Activated T-helper 1 cell treated with anti-CD3 and anti-CD28 coated beads, Interleukin-12 subunit alpha, Interleukin-12 subunit beta, Interleukin-2, Interleukin-4 antibody, amounts not matched to agents 30 ng/mL and 10 ng/mL and 1 ng/mL, durations not matched to agents 14 hours and 24 hours and 36 hours (primary cell): ENCODE measurements at regions of chr19 and their contacts with region 1.

Region 1: DNA sequence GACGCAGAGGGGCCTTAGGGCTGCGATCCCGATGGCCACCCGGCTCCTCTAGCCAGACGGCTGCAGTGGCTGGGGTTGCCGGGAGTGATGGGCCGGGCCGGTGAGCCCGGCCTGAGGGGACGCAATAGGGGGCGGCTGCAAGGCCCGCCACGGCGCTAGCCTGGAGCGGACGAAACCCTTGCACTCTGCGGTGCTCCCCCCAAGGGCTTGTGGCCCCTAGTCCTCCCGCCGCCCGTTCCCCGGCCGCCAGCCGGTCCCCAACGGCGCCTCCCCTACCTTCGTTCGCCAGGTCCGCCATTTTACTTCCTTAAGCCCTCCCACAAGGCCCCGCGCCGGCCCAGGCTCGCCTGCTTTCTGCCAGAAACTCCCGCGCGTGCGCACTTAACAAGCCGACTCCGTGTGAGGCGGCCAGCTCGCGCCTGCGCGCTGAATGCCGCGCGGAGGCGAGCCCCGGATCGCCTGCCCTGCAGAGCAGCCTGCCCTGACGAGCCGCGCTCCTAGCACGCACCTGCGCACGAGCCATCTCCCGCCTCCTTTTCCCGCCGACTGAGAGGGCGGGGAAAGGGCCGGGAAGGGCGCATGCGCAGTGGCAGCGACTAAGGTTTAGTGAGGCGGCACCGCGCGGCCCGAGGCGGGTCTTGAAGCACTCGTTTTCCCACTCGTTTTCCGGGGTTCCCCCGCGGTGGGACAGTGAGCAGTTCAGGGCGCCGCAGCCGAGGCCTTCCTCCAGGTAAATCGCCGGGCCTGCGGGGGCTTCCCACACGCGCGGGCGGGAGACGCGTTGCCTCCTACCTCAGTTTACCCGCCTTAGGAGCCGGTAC is at the start of gene RANBP3:
- DNase-seq: peak; percentile 100
- H3K4me3 Mint-ChIP-seq: peak within 1 kb of the TSS; percentile 98
- H3K27ac Mint-ChIP-seq: peak within 1 kb of the TSS; percentile 92
- H3K4me1 Mint-ChIP-seq: peaks cover 54% of the 10 kb centered on the region
- H3K27me3 Mint-ChIP-seq: no peaks in the 10 kb centered on the region
- total RNA-seq, gene RANBP3: 122 and 126 TPM in 2 replicates

Region 2: DNA sequence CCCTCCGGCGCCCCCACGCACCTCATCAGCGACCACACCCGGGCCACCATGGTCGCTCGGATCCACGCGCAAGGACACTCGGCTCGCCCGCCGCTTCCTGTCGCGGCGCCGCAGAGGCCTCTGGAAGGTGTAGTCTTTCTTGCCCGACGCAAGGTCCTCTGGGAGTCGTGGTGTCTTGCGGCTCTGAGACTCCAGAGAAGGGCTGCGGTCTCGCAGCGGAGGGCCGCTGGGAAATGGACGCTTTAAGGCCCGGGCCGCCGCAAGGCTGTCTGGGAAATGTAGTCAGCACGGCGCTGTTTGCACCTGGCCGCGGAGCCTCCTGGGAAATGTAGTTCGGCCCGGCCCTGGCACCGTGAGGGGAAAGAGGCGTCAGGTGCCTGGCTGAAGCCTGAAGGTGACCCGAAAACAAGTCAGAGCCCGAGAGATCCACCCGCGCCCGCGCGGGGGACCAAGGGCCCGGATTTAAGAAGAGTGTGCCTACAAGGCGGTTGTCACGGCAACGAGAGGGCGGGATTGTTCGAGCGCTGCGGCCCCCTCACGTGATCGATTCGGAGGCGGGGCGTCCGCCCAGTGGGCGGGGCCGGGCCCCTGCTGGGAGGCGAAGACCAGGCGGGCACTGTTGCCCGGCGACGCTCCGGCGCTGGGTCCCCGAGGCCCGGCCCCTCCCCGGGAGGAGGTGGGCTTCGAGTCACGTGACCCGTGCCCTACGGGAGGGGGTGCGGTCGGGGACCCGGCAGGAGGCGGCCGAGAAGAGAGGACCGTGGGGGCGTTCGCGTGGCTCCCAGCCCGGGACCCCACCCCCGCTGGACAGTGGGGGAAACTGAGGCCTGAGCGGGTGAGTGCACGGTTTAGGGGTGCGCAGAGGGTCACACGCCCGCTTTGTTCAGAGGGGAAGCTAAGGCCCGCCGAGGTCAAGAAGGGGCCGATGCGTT is 297.3 kb before region 1 on chr19 and contains the starts of genes HSD11B1L and MICOS13:
- intact Hi-C with region 1: loop called (anchors 2 kb)
- DNase-seq: peak; percentile 97
- H3K4me3 Mint-ChIP-seq: peak within 1 kb of the TSS; percentile 99
- H3K27ac Mint-ChIP-seq: peak within 1 kb of the TSS; percentile 94
- H3K4me1 Mint-ChIP-seq: peaks cover 19% of the 10 kb centered on the region
- H3K27me3 Mint-ChIP-seq: peaks cover 3% of the 10 kb centered on the region
- total RNA-seq, gene HSD11B1L: 1.9 TPM in 2 replicates
- total RNA-seq, gene MICOS13: 57.4 and 60.6 TPM in 2 replicates

Region 3: GRCh38 chr19:5803752-5804515 is 174.1 kb before region 1 on chr19:
- intact Hi-C with region 1: no loop called
- DNase-seq: peak; percentile 92
- H3K4me3 Mint-ChIP-seq: peak overlapping the region; percentile 80
- H3K27ac Mint-ChIP-seq: peak overlapping the region; percentile 63
- H3K4me1 Mint-ChIP-seq: peaks cover 13% of the 10 kb centered on the region
- H3K27me3 Mint-ChIP-seq: peaks cover 35% of the 10 kb centered on the region

Region 4: GRCh38 chr19:5827891-5828660 is 149.9 kb before region 1 on chr19:
- intact Hi-C with region 1: loop called (anchors 2 kb)
- DNase-seq: peak; percentile 96
- H3K4me3 Mint-ChIP-seq: peak overlapping the region; percentile 99
- H3K27ac Mint-ChIP-seq: peak overlapping the region; percentile 99
- H3K4me1 Mint-ChIP-seq: peaks cover 13% of the 10 kb centered on the region
- H3K27me3 Mint-ChIP-seq: peaks cover 2% of the 10 kb centered on the region

Region 5: GRCh38 chr19:5961969-5962945 is 15.7 kb before region 1 on chr19:
- intact Hi-C with region 1: loop called (anchors 2 kb)
- DNase-seq: peak; percentile 74
- H3K4me3 Mint-ChIP-seq: peak overlapping the region; percentile 58
- H3K27ac Mint-ChIP-seq: peak overlapping the region; percentile 88
- H3K4me1 Mint-ChIP-seq: peaks cover 71% of the 10 kb centered on the region
- H3K27me3 Mint-ChIP-seq: no peaks in the 10 kb centered on the region

Region 6: GRCh38 chr19:6362027-6362350 is 384.0 kb after region 1 on chr19:
- intact Hi-C with region 1: loop called (anchors 5 kb)
- DNase-seq: no peak
- H3K4me3 Mint-ChIP-seq: peak overlapping the region; percentile 98
- H3K27ac Mint-ChIP-seq: peak overlapping the region; percentile 96
- H3K4me1 Mint-ChIP-seq: peaks cover 13% of the 10 kb centered on the region
- H3K27me3 Mint-ChIP-seq: no peaks in the 10 kb centered on the region